T-cell (primary cell): ENCODE measurements at regions of chr10 and their contacts with region 1.

Region 1: DNA sequence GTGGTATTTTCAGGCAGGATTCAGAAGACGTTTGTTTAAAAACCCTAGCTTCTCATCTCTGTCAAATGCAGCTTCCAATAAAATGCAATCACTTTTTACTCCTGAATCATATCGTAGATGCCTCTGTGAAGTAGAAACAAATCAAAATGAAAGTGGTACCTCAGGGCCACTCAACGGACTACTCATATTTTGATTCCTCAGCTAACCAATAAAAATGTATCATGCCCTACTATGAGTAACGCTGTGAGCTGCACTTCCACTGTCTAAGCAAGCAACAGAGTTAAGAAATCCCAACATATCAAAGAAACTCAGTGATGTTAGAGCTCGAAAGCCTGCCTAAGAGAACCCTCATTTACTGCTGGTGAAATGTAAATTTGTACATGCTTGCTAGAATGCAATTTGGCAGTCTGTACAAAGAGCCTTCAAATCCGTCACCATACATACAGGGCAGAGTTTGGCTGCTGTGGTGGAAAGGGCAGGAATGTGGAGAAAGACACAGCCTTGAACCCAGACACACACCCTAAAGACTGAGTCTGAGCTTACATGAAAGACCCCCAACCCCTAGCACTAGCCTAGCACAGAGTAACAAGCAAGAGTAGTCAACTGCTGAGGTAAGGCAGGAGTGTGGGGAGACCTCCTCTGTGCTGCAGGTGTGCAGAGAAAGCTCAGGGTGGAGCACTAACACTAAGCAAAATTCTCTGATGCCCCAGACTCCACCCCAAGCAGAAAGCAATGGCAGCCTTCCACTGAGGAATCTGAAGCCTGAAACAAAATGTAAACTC is 151.5 kb downstream of the ANK3 start:
- DNase-seq: peak in 3 of 35 experiments; percentile 0 to 16 (median 14)
- ATAC-seq: peak in 1 of 4 experiments; percentile 50
- H3K4me3 ChIP-seq: peak overlapping the region in 1 of 2 donors; percentile 5
- H3K4me3 Mint-ChIP-seq: peak overlapping the region; percentile 42 to 70 (median 57)
- H3K27ac ChIP-seq: peak overlapping the region; percentile 38
- H3K27ac Mint-ChIP-seq: peak overlapping the region; percentile 44 to 48
- H3K4me1 ChIP-seq: peaks cover 7 to 11% of the 10 kb centered on the region in 2 experiments
- H3K4me1 Mint-ChIP-seq: peaks cover 32 to 36% (median 34%) of the 10 kb centered on the region in 3 donors
- H3K27me3 ChIP-seq: no peaks in the 10 kb centered on the region
- H3K27me3 Mint-ChIP-seq: no peaks in the 10 kb centered on the region

Region 2: GRCh38 chr10:61016630-61017029 is 778.5 kb after region 1 on chr10:
- CTCF ChIA-PET with region 1: interaction called in 1 of 2 experiments, 10 read pairs
- POLR2A ChIA-PET with region 1: no interaction called
- DNase-seq: no peak
- ATAC-seq: no peak
- H3K4me3 ChIP-seq: no peak overlapping the region
- H3K4me3 Mint-ChIP-seq: no peak overlapping the region
- H3K27ac ChIP-seq: no peak overlapping the region
- H3K27ac Mint-ChIP-seq: no peak overlapping the region
- H3K4me1 ChIP-seq: no peaks in the 10 kb centered on the region
- H3K4me1 Mint-ChIP-seq: no peaks in the 10 kb centered on the region
- H3K27me3 ChIP-seq: no peaks in the 10 kb centered on the region
- H3K27me3 Mint-ChIP-seq: peaks cover 4 to 16% of the 10 kb centered on the region in 2 donors